Activated T-helper 1 cell treated with anti-CD3 and anti-CD28 coated beads, Interleukin-12 subunit alpha, Interleukin-12 subunit beta, Interleukin-2, Interleukin-4 antibody, amounts not matched to agents 30 ng/mL and 10 ng/mL and 1 ng/mL, durations not matched to agents 14 hours and 24 hours and 36 hours (primary cell): ENCODE measurements at regions of chr17 and their contacts with region 1.

Region 1: DNA sequence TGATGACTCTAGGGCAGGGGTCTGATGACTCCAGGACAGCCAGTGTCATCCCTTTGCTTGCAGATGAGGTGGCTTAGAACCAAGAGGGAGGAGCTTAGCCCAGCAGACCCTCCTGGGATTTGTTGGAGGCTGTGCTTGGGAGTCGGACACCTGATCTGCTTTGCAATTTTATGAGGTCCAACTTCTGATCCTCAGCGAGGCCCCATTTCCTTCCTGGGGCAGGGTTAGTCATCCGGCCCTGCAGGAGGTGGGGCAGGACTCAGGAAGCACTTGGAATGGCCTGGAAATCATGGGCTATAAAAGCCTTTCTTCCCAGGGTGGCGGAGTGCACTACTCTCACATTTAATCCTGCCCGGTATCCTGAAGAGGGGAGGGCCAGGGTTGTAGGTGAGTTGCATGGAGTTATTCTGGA is 168.5 kb downstream of the MSI2 start:
- DNase-seq: no peak
- H3K4me3 Mint-ChIP-seq: no peak overlapping the region
- H3K27ac Mint-ChIP-seq: no peak overlapping the region
- H3K4me1 Mint-ChIP-seq: peaks cover 45% of the 10 kb centered on the region
- H3K27me3 Mint-ChIP-seq: no peaks in the 10 kb centered on the region

Region 2: GRCh38 chr17:57357399-57357807 is 67.4 kb before region 1 on chr17:
- intact Hi-C with region 1: loop called (anchors 5 kb)
- DNase-seq: no peak
- H3K4me3 Mint-ChIP-seq: peak overlapping the region; percentile 46
- H3K27ac Mint-ChIP-seq: peak overlapping the region; percentile 79
- H3K4me1 Mint-ChIP-seq: peaks cover 51% of the 10 kb centered on the region
- H3K27me3 Mint-ChIP-seq: no peaks in the 10 kb centered on the region

Region 3: DNA sequence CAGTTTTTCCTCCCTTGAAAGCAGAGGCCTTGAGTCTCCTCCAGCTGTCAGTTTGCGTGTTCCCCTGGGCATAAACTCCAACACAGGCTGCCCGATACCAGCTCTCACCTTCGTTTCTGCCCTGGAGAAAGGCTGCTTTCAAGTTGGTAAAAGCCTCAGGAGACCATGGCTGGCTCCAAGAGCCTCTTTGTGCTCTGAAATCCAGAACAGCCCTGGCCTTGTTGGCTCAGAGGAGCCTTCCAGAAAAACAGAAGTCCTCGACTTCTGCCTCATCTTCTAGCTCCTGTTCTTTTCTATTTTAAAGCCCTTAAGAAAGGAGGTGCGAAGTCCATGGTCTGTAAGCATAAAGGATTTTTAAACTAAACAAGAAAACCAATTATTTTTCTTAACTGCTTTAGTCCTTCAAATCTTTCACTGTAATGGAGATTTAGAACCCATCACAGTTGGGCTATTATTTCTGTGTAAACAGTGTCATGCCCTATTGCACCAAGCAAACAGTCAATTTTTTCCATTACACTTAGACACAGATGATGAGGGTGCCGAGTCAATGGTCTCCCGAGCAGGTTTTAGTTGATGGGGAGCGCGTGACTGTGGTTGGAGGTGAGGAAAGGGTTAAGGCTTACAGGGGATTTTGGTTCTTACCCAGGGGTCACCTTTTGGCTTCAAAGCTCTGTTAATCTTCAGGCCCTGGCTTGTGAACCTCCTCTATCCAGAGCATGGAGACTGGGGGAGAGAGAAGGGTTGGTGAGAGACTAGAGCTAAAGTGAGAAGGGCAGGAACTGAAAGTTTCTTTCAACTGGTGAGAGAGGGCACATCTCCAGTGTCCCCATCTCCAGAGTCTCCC is 44.4 kb after region 1 on chr17:
- intact Hi-C with region 1: no loop called
- DNase-seq: no peak
- H3K4me3 Mint-ChIP-seq: no peak overlapping the region
- H3K27ac Mint-ChIP-seq: peak overlapping the region; percentile 72
- H3K4me1 Mint-ChIP-seq: peaks cover 37% of the 10 kb centered on the region
- H3K27me3 Mint-ChIP-seq: no peaks in the 10 kb centered on the region